Esophagus squamous epithelium (tissue), 5 donors: ENCODE measurements at regions of chr4 and their contacts with region 1.

Region 1: GRCh38 chr4:82284858-82285805 is 88.7 kb downstream of the HNRNPD start:
- DNase-seq: peak; percentile 95
- H3K4me3 ChIP-seq: peak overlapping the region; percentile 26 to 71 (median 49)
- H3K27ac ChIP-seq: peak overlapping the region; percentile 60 to 87 (median 76)
- H3K4me1 ChIP-seq: peaks cover 0 to 14% (median 5%) of the 10 kb centered on the region in 3 donors
- H3K27me3 ChIP-seq: no peaks in the 10 kb centered on the region
- CTCF ChIP-seq: peak; percentile 70 to 97 (median 87)
- POLR2A ChIP-seq: no peak

Region 2: DNA sequence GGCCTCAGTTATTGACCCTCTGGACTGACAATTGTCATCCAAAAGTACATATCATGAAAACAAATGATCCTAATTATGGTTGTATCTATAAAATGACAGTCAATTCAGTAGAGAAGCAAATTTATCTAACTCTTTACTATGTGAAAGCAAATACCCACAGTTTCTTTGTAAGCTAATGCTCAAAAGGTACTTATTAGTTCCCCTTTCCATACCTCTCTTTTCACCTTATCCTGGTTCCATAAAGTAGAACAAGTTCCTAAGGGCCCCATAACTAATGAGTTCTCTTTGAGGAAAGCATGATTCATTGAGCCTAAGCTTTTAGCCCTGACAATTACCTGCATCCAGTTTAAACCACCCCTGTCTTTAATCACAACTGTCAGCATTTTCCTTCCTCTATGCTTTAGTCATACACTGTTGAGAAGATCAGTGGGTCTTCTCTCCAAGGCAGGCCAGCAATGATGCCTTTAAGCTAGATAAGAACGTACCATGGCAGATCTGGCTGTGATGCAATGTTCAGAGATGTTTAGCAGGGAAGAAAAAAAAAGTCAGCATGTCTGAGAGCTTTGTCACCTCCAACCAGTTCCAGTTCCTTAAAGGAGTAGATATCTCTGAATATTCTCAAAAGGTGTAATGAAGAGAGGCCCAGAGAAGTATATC is 633.8 kb before region 1 on chr4:
- intact Hi-C with region 1: loop called (anchors 5 kb)
- DNase-seq: no peak
- H3K4me3 ChIP-seq: no peak overlapping the region
- H3K27ac ChIP-seq: peak overlapping the region in 1 of 4 donors; percentile 17
- H3K4me1 ChIP-seq: peaks cover 0 to 20% (median 5%) of the 10 kb centered on the region in 3 donors
- H3K27me3 ChIP-seq: no peaks in the 10 kb centered on the region
- CTCF ChIP-seq: no peak
- POLR2A ChIP-seq: no peak

Region 3: GRCh38 chr4:82346126-82346525 is 61.0 kb after region 1 on chr4:
- intact Hi-C with region 1: loop called (anchors 10 kb)
- DNase-seq: no peak
- H3K4me3 ChIP-seq: no peak overlapping the region
- H3K27ac ChIP-seq: no peak overlapping the region
- H3K4me1 ChIP-seq: no peaks in the 10 kb centered on the region
- H3K27me3 ChIP-seq: no peaks in the 10 kb centered on the region
- CTCF ChIP-seq: no peak
- POLR2A ChIP-seq: no peak

Region 4: DNA sequence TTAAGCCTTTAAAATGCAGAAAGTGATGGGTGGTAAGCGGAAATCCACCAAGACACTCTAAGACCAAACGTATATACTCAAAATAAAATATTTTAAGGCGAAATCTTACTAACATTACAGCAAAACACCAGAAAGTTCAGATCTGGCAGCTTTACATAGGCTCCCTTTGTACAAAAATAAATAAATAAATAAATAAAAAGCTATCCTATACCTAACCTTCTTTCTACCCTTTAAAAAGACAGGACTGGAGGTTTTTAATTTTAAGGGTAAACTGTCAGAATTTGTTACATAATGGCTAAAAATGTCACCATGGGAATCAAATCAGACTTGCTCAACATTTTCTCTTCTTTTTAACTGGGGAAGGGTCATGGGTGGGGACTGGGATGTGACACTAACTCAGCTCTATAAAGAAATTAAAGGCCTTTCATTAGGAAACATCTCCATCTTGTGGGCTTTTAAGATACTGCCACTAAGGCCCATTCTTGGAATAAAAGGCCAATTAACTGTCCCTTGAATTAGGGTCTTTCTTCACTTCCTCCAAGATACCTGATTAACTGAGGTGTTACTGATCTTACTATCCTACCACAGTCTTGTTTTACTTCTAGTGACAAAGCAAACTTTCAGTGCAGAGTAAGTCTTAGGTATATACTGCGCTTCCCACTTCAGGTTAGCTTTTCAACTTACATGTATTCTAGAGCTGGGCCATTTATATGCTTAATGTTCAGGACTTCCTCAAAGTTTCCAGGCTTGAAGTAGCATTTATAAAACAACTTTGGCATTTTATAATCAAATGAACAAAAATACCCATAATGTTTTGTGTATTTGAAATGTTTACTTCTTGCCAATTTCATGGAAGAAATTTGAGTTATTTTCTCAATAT is 75.4 kb after region 1 on chr4:
- intact Hi-C with region 1: no loop called
- DNase-seq: no peak
- H3K4me3 ChIP-seq: no peak overlapping the region
- H3K27ac ChIP-seq: peak overlapping the region in 2 of 4 donors; percentile 19 to 42
- H3K4me1 ChIP-seq: peaks cover 12 to 83% (median 40%) of the 10 kb centered on the region in 3 donors
- H3K27me3 ChIP-seq: no peaks in the 10 kb centered on the region
- CTCF ChIP-seq: peak; percentile 34 to 65 (median 56)
- POLR2A ChIP-seq: no peak